ENCODE measurements at regions of chr16 and their contacts with region 1.

Region 1: GRCh38 chr16:68399456-68399855 is 48.9 kb downstream of the SMPD3 start:
- DNase-seq: no peak
- H3K4me3 ChIP-seq: no peak overlapping the region
- H3K27ac ChIP-seq: no peak overlapping the region
- H3K4me1 ChIP-seq: no peaks in the 10 kb centered on the region
- H3K27me3 ChIP-seq: peaks cover 0 to 13% of the 10 kb centered on the region in 2 donors
- CTCF ChIP-seq: no peak

Region 2: DNA sequence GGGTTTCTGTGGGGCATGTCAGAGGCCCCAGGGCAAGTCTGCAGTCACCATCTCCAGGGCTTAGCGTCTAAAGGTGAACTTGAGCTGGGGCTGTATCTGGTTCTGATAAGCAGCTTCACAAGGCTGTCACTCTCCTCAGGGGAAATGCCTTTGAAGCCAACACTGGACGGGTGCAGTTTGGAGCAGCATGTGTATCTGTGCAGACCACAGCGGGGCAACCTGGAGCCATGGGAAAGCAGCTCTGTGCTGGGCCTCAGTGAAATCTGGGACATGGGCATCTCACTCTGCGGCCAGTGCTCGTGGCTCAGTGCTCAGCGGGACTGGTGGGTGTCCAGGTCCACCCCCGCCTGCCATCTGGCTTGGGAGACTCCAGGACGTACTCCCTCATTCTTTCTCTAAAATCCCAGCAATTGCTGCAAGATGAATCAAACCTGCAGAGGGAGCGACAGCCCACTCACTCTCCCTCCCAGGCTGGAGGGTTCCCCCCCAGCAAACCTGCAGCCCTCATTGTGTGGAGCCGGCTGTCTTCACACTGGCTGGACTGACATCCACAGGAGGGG is 25.1 kb before region 1 on chr16:
- intact Hi-C with region 1: loop called (anchors 1 kb)
- DNase-seq: no peak
- H3K4me3 ChIP-seq: no peak overlapping the region
- H3K27ac ChIP-seq: no peak overlapping the region
- H3K4me1 ChIP-seq: peaks cover 0 to 6% (median 0%) of the 10 kb centered on the region in 4 donors
- H3K27me3 ChIP-seq: peaks cover 0 to 16% of the 10 kb centered on the region in 2 donors
- CTCF ChIP-seq: no peak

Region 3: DNA sequence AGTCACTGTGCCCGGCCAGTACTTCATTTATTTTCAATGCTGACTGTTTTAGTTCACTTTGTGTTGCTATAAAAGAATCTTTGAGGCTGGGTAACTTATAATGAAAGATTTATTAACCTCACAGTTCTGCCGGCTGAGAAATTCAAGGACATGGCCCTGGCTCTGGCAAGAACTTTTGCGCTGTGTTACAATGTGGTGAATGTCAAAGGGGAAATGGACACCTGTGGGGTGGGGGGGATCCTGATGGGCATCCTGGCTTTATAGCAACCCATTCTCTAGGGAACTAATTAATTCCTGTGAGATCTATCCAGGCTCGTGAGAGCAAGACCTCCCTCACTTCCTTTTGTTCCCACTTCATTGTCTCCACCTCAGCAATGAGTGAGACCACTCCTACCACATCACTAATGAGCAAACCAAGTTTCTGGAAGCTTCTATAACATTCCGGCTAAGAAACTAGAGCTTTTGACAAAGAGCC is 228.5 kb after region 1 on chr16:
- intact Hi-C with region 1: no loop called
- DNase-seq: no peak
- H3K4me3 ChIP-seq: no peak overlapping the region
- H3K27ac ChIP-seq: no peak overlapping the region
- H3K4me1 ChIP-seq: no peaks in the 10 kb centered on the region
- H3K27me3 ChIP-seq: no peaks in the 10 kb centered on the region
- CTCF ChIP-seq: no peak

Measured in tibial artery (tissue), 4 donors.